ENCODE measurements at regions of chr6 and their contacts with region 1.

Region 1: DNA sequence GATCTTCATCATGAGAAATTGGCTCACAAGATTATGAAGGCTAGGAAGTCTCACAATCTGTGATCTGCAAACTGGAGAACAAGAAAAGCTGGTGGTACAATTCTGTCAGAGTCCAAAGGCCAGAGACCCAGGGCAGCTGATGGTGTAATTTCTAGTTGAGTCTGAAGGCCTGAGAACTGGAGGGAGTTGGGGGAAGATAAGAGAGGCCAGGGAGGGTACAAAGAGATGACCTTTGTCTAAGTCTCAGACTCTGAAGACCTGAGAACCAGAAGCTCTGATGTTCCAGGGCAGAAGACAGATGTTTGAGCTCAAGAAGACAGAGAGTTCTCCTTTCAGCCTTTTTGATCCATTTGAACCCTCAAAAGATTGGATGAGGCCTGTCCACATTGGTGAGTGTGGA is 280.6 kb downstream of the HDGFL1 start:
- DNase-seq: no peak
- H3K4me3 ChIP-seq: no peak overlapping the region
- H3K27ac ChIP-seq: no peak overlapping the region
- H3K4me1 ChIP-seq: no peaks in the 10 kb centered on the region
- H3K27me3 ChIP-seq: no peaks in the 10 kb centered on the region
- CTCF ChIP-seq: no peak
- POLR2A ChIP-seq: no peak

Region 2: GRCh38 chr6:22575190-22575589 is 274.7 kb before region 1 on chr6:
- intact Hi-C with region 1: no loop called
- DNase-seq: no peak
- H3K4me3 ChIP-seq: no peak overlapping the region
- H3K27ac ChIP-seq: no peak overlapping the region
- H3K4me1 ChIP-seq: no peaks in the 10 kb centered on the region
- H3K27me3 ChIP-seq: no peaks in the 10 kb centered on the region
- CTCF ChIP-seq: no peak
- POLR2A ChIP-seq: no peak

Region 3: DNA sequence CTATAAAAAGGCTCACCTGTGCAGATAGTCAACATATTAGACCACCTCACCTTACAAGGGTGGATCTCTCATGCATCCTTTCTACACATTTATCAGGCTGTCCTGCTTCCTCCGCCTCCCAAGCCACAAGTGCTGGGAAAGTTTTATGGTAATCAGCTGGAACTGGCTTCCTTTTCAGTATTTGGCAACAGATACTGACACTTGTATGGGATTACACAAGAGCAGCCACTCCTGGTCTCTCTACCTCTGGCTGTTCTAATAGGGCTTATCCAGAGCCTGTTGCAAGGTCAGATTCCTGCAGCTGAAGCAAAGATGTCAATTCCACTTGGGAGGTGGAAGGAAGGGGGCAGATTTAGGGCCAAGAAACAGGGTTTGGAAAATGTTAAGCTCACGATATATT is 1640.0 kb after region 1 on chr6:
- intact Hi-C with region 1: loop called (anchors 10 kb)
- DNase-seq: no peak
- H3K4me3 ChIP-seq: no peak overlapping the region
- H3K27ac ChIP-seq: no peak overlapping the region
- H3K4me1 ChIP-seq: peaks cover 7% of the 10 kb centered on the region
- H3K27me3 ChIP-seq: no peaks in the 10 kb centered on the region
- CTCF ChIP-seq: no peak
- POLR2A ChIP-seq: no peak